Activated CD4-positive, alpha-beta memory T cell treated with anti-CD3 and anti-CD28 coated beads for 36 hours (primary cell): ENCODE measurements at regions of chrX and their contacts with region 1.

Region 1: GRCh38 chrX:39309018-39309635 is 507.9 kb downstream of the MID1IP1 start:
- DNase-seq: peak; percentile 79
- H3K4me3 Mint-ChIP-seq: no peak overlapping the region
- H3K27ac Mint-ChIP-seq: peak overlapping the region; percentile 100
- H3K4me1 Mint-ChIP-seq: peaks cover 78% of the 10 kb centered on the region
- H3K27me3 Mint-ChIP-seq: no peaks in the 10 kb centered on the region

Region 2: GRCh38 chrX:38954520-38954919 is 354.6 kb before region 1 on chrX:
- CTCF ChIA-PET with region 1: no interaction called
- POLR2A ChIA-PET with region 1: no interaction called
- intact Hi-C with region 1: no loop called
- DNase-seq: no peak
- H3K4me3 Mint-ChIP-seq: no peak overlapping the region
- H3K27ac Mint-ChIP-seq: no peak overlapping the region
- H3K4me1 Mint-ChIP-seq: no peaks in the 10 kb centered on the region
- H3K27me3 Mint-ChIP-seq: no peaks in the 10 kb centered on the region

Region 3: DNA sequence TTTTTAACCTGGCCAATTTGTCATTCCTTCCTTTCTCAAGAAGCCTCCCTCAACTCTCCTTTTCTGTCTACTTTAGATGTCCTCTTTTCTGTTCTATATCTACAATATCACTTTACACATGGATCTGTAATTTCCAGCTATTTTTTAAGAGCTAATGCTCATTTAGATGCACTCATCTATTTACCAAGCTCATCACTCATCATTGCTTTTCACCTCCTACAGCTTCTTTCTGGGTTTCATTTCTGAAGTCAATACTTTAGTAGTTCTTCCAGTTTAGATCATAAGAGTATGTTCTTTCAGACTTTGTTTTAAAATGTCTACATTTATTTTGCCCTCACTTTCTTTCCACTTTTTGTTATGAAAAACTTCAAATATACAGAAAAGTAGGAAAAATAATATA is 40.9 kb before region 1 on chrX:
- CTCF ChIA-PET with region 1: no interaction called
- POLR2A ChIA-PET with region 1: interaction called, 7 read pairs
- intact Hi-C with region 1: loop called (anchors 1 kb)
- DNase-seq: no peak
- H3K4me3 Mint-ChIP-seq: peak overlapping the region; percentile 17
- H3K27ac Mint-ChIP-seq: peak overlapping the region; percentile 84
- H3K4me1 Mint-ChIP-seq: peaks cover 56% of the 10 kb centered on the region
- H3K27me3 Mint-ChIP-seq: no peaks in the 10 kb centered on the region

Region 4: GRCh38 chrX:39331082-39331704 is 22.1 kb after region 1 on chrX:
- CTCF ChIA-PET with region 1: interaction called, 4 read pairs
- POLR2A ChIA-PET with region 1: interaction called, 13 read pairs
- intact Hi-C with region 1: loop called (anchors 1 kb)
- DNase-seq: peak; percentile 73
- H3K4me3 Mint-ChIP-seq: no peak overlapping the region
- H3K27ac Mint-ChIP-seq: peak overlapping the region; percentile 88
- H3K4me1 Mint-ChIP-seq: peaks cover 71% of the 10 kb centered on the region
- H3K27me3 Mint-ChIP-seq: no peaks in the 10 kb centered on the region

Region 5: DNA sequence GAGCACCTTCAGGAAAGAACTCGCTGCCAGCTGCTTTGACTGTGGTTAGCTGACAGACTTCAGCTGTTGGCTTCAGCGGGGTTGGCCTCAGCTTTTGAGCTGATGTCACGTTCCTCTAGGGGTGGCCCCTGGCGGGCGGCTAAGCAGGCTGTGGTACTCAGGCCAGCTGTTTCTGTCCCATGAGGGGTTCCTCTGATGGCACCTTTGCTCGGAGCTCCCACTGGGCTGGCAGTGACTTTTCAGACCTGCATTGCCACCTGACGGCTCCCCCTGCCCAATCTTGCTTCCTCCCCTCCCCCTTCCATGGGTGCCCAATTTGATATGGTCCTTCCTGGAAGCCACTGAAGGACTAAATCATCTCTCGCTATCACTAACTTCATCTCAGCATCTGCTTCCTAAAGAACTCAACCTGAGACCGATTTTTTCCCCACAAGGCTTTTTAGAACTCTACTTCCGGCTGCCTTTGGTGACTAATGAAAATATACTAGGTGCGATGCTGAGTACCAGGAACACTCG is 269.3 kb after region 1 on chrX:
- CTCF ChIA-PET with region 1: interaction called, 3 read pairs
- POLR2A ChIA-PET with region 1: no interaction called
- intact Hi-C with region 1: loop called (anchors 1 kb)
- DNase-seq: peak; percentile 84
- H3K4me3 Mint-ChIP-seq: peak overlapping the region; percentile 16
- H3K27ac Mint-ChIP-seq: peak overlapping the region; percentile 91
- H3K4me1 Mint-ChIP-seq: peaks cover 23% of the 10 kb centered on the region
- H3K27me3 Mint-ChIP-seq: no peaks in the 10 kb centered on the region